Activated naive CD4-positive, alpha-beta T cell treated with anti-CD3 and anti-CD28 coated beads for 36 hours (primary cell): ENCODE measurements at regions of chr2 and their contacts with region 1.

Region 1: GRCh38 chr2:113940891-113941290 is 51.0 kb downstream of the ACTR3 start:
- DNase-seq: no peak
- H3K4me3 Mint-ChIP-seq: no peak overlapping the region
- H3K27ac Mint-ChIP-seq: no peak overlapping the region
- H3K4me1 Mint-ChIP-seq: peaks cover 3% of the 10 kb centered on the region
- H3K27me3 Mint-ChIP-seq: no peaks in the 10 kb centered on the region

Region 2: GRCh38 chr2:113930448-113930847 is 10.4 kb before region 1 on chr2:
- CTCF ChIA-PET with region 1: interaction called, 3 read pairs
- intact Hi-C with region 1: loop called (anchors 2 kb)
- DNase-seq: no peak
- H3K4me3 Mint-ChIP-seq: no peak overlapping the region
- H3K27ac Mint-ChIP-seq: peak overlapping the region; percentile 36
- H3K4me1 Mint-ChIP-seq: peaks cover 30% of the 10 kb centered on the region
- H3K27me3 Mint-ChIP-seq: no peaks in the 10 kb centered on the region

Region 3: DNA sequence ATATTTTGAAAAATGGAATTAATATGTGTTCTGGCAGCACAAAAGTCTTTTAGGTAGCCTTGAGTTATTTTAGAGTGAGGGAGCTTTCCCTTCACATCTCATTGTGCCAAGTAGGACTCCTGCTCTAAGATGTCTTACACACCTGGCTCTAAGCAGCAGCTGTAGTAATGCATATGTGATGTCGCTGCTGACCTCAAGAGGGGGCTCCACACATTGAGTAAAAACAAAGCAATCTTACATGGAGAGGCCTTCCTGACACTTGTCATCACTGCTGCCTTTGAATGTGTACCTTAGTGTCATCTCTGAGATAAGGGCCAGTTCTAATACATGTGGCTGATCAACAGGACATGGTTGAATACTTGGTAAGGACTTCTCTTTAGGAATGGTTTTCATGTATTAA is 24.8 kb after region 1 on chr2:
- CTCF ChIA-PET with region 1: interaction called, 3 read pairs
- intact Hi-C with region 1: loop called (anchors 2 kb)
- DNase-seq: peak; percentile 56
- H3K4me3 Mint-ChIP-seq: no peak overlapping the region
- H3K27ac Mint-ChIP-seq: peak overlapping the region; percentile 26
- H3K4me1 Mint-ChIP-seq: peaks cover 25% of the 10 kb centered on the region
- H3K27me3 Mint-ChIP-seq: no peaks in the 10 kb centered on the region